H1 (cell line): ENCODE measurements at regions of chr7 and their contacts with region 1.

Region 1: DNA sequence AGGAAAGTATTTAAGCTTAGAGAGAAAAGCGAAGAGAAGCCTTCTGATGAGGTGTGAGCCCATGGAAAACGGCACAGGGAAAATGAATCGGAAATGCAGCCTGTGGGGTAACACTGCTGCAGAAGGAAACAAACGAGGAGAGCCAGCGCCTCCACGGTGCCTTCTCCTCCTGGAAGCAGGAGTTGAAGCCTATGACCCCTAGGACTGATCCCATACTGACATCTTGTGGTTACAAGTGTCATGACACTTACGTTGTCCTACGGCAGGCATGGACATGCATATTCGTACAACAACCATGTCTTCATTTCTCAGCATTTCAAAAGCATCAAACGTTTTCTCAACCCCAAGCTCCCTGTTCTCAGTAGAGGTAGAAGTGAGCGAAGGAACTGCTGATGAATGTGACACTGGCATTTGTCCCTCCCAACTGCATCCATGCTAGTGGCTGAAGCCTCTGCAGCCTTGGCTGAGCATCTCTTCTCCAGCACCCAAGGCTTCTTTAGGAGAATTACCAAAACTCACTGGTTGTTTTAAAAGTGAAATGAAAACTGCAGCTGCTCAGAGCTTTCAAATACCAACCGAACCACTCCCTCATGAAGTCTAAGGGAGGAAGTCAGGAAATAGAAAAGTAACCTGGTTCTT is 160.2 kb downstream of the JAZF1 start:
- DNase-seq: peak; percentile 43 to 68
- H3K4me3 ChIP-seq: no peak overlapping the region
- H3K27ac ChIP-seq: no peak overlapping the region
- H3K4me1 ChIP-seq: peaks cover 0 to 3% (median 2%) of the 10 kb centered on the region in 4 experiments; a peak in 4 of 7 replicates
- H3K27me3 ChIP-seq: no peaks in the 10 kb centered on the region
- CTCF ChIP-seq: peak; percentile 55 to 98 (median 93)
- EP300 ChIP-seq: no peak
- POLR2A ChIP-seq: no peak
- RAD21 ChIP-seq: peak; percentile 98 to 99

Region 2: GRCh38 chr7:27933671-27934565 is 86.5 kb before region 1 on chr7:
- CTCF ChIA-PET with region 1: interaction called, 12 read pairs
- POLR2A ChIA-PET with region 1: no interaction called
- DNase-seq: no peak
- H3K4me3 ChIP-seq: no peak overlapping the region; a peak in 1 of 8 replicates
- H3K27ac ChIP-seq: no peak overlapping the region
- H3K4me1 ChIP-seq: peaks cover 0 to 8% (median 5%) of the 10 kb centered on the region in 4 experiments; a peak in 5 of 7 replicates
- H3K27me3 ChIP-seq: no peaks in the 10 kb centered on the region
- CTCF ChIP-seq: peak in 2 of 3 experiments; percentile 9 to 48; a peak in 2 of 4 replicates
- EP300 ChIP-seq: no peak
- POLR2A ChIP-seq: no peak
- RAD21 ChIP-seq: peak; percentile 44 to 52; a peak in 3 of 4 replicates

Region 3: GRCh38 chr7:28037220-28038010 is 17.0 kb after region 1 on chr7:
- CTCF ChIA-PET with region 1: interaction called, 28 read pairs
- POLR2A ChIA-PET with region 1: no interaction called
- DNase-seq: no peak
- H3K4me3 ChIP-seq: no peak overlapping the region
- H3K27ac ChIP-seq: no peak overlapping the region
- H3K4me1 ChIP-seq: peaks cover 0 to 3% (median under 1%) of the 10 kb centered on the region in 4 experiments; a peak in 2 of 7 replicates
- H3K27me3 ChIP-seq: no peaks in the 10 kb centered on the region
- CTCF ChIP-seq: no peak
- EP300 ChIP-seq: no peak
- POLR2A ChIP-seq: no peak
- RAD21 ChIP-seq: no peak